Activated naive CD4-positive, alpha-beta T cell treated with anti-CD3 and anti-CD28 coated beads for 36 hours (primary cell): ENCODE measurements at regions of chr1 and their contacts with region 1.

Region 1: DNA sequence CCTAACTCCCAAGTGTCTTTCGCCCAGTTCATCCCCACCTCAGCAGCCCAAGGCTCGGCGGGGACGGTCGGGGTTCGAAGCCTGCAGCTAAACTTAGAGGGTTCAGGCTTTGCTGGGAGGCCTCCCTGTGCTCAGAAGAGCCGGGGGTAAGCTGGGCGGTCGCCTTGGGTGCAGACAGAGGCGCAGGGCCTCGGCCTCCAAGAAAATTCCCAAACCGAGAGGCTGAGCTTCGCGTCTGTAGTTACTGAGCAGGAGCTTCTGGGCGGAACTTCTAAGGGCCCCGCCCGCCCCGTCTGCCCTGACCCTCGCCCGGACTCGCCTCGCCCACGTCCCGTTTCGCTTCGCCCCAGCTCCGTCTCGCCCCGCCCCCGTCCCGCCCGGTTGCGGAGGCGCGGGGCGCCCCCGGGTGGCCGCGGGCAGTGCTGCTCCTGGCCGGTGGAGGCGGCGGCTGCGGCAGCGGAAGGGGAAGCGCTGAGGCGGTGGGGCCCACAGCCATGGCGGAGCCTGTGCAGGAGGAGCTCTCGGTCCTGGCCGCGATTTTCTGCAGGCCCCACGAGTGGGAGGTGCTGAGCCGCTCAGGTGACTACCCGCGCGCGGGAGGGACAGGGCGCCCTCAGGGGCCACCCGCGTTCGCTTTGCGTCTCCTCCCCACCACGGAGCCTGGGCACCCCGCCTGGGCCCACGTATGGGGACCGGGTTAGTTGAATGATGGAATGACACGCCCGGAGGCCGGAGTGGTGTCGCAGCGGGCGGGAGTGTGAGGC is at the start of gene RWDD3:
- DNase-seq: peak; percentile 92
- H3K4me3 Mint-ChIP-seq: peak within 1 kb of the TSS; percentile 90
- H3K27ac Mint-ChIP-seq: peak within 1 kb of the TSS; percentile 84
- H3K4me1 Mint-ChIP-seq: peaks cover 40% of the 10 kb centered on the region
- H3K27me3 Mint-ChIP-seq: peaks cover 5% of the 10 kb centered on the region
- total RNA-seq, gene RWDD3: 11.4 to 12.4 TPM

Region 2: GRCh38 chr1:94417978-94418663 is 815.8 kb before region 1 on chr1 and contains the start of gene ABCD3:
- CTCF ChIA-PET with region 1: no interaction called
- intact Hi-C with region 1: loop called (anchors 1 kb)
- DNase-seq: peak; percentile 94
- H3K4me3 Mint-ChIP-seq: no peak within 1 kb of the TSS
- H3K27ac Mint-ChIP-seq: peak within 1 kb of the TSS; percentile 43
- H3K4me1 Mint-ChIP-seq: peaks cover 35% of the 10 kb centered on the region
- H3K27me3 Mint-ChIP-seq: no peaks in the 10 kb centered on the region
- total RNA-seq, gene ABCD3: 29.2 to 30.8 TPM

Region 3: DNA sequence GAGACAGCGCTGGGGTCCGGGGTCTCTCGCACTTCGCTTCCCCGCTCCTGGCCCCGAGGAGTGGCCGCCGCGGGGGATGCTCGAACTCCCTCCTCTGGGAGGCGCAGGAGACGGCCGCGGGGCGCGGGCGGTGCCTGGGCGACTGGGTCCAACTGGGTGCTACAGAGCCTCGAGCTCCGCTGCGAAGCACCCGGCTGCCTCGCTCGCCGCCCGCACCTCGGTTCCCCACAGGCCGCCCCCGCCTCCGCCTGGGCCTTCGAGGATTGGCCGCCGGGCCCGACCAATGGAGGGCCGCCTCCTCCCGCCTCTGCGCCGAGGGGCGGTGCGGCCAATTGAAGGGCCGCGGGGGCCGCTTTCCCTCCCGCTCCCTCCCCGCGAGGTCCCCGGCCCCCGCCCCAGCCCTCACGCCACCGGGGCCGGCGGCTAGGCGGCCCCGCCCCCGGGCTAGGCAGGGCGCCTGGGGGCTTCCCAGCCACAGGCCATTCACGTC is 307.0 kb before region 1 on chr1 and contains the start of gene CNN3:
- CTCF ChIA-PET with region 1: no interaction called
- intact Hi-C with region 1: loop called (anchors 2 kb)
- DNase-seq: peak; percentile 77
- H3K4me3 Mint-ChIP-seq: peak within 1 kb of the TSS; percentile 85
- H3K27ac Mint-ChIP-seq: no peak within 1 kb of the TSS
- H3K4me1 Mint-ChIP-seq: peaks cover 21% of the 10 kb centered on the region
- H3K27me3 Mint-ChIP-seq: peaks cover 15% of the 10 kb centered on the region
- total RNA-seq, gene CNN3: 10.0 to 10.6 TPM

Region 4: DNA sequence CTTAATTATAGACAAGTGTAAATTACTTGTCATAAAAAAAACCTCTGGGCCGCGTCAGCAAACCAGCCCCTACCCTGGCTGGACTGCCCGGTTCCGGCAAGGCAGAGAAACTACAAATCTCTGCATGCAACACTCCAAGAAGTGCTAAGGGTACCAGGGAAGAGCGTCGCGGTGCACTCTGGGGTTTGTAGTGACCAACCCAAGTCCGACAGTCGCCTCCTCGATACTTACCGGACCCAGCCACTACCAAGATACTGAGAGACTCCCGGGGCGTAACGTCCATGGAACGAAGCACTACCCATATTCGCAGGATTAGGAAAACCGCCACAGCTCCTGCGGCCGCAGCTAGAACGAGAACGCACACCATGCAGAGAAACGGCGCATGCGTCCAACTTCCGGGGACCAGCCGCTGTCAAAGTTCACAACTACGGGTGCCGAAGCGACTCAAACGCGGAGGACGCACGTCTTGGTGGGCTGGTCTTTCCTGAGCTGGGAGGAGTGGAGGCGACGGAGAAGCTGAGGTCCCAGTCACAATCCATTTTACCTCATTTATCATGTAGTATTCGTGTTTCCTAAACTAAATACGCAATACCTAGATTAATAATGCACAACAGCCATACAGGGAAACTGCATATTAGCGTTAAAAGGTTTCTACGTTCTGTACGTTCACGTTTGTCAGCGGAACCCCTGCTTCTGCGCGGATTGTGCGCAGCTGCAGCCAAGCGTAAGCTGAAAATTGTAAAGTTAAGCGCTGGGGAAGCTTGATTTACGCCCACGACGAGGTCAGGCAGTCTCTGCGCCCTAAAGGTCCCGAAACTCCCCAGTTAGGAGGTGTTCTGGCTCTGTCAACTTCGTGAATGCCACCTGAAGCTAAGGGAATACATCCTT is 161.1 kb before region 1 on chr1 and contains the start of gene ALG14:
- CTCF ChIA-PET with region 1: interaction called, 7 read pairs
- intact Hi-C with region 1: loop called (anchors 1 kb)
- DNase-seq: peak; percentile 96
- H3K4me3 Mint-ChIP-seq: peak within 1 kb of the TSS; percentile 91
- H3K27ac Mint-ChIP-seq: peak within 1 kb of the TSS; percentile 95
- H3K4me1 Mint-ChIP-seq: peaks cover 12% of the 10 kb centered on the region
- H3K27me3 Mint-ChIP-seq: peaks cover 2% of the 10 kb centered on the region
- total RNA-seq, gene ALG14: 4.1 to 6.2 TPM

Region 5: DNA sequence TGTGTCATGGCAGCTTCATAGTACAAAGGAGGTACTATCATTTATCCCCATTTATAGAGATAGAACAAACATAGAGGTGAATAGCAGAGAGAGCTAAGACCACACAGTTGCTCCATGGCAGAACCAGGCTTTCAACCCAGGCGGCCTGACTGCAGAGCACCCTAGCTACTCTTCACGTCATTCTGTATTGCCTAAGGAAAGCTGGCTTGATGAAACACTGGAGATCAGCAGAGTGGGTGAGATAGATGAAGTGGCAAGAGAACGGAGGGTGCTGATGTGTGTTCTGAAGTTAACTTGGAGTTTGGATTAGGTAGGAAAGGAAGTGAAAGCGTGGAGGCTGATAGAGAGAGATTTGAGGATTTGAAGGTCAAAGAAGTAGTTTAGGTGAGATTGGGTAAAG is 47.8 kb before region 1 on chr1:
- CTCF ChIA-PET with region 1: no interaction called
- intact Hi-C with region 1: no loop called
- DNase-seq: no peak
- H3K4me3 Mint-ChIP-seq: no peak overlapping the region
- H3K27ac Mint-ChIP-seq: no peak overlapping the region
- H3K4me1 Mint-ChIP-seq: no peaks in the 10 kb centered on the region
- H3K27me3 Mint-ChIP-seq: peaks cover 19% of the 10 kb centered on the region

Region 6: DNA sequence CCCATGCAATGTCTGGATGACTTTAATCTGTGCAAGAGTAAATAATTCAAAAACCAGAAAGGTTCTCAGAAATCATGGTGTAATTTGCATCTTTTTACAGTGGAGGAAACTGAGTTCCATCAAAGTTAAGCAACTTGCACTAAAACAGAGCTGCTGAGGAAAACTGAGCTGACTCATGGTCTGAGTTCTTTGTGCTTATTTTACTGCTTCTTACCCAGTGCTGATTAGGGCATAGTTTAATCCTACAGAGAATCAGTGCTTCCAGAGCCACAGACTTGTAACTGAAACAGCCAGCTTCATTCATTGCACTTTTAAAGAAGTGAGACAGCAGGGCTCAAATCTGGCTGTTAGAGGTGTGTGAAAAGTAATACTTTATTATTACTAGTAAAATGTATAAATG is 10.8 kb before region 1 on chr1:
- CTCF ChIA-PET with region 1: interaction called, 12 read pairs
- intact Hi-C with region 1: no loop called
- DNase-seq: no peak
- H3K4me3 Mint-ChIP-seq: no peak overlapping the region
- H3K27ac Mint-ChIP-seq: no peak overlapping the region
- H3K4me1 Mint-ChIP-seq: no peaks in the 10 kb centered on the region
- H3K27me3 Mint-ChIP-seq: peaks cover 8% of the 10 kb centered on the region

Region 7: DNA sequence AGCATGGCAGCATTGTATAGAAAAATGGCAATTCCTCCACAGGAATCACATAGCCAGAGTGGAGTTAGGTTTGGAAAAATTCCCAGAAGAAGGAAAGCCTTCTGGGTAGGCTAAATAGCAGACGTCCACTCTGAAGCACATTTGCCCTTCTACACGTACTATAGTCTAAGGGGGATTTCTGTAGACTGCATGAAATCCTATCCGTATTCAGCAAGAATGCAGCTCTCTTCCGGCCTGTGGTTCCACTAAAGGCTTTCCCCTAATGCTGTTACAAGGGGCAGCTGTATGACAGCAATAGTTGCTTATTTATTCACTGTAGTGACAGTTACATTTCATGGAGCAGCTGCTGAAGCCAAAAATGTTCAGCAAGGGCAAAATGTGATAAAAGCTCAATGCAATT is 263.6 kb after region 1 on chr1:
- CTCF ChIA-PET with region 1: no interaction called
- intact Hi-C with region 1: no loop called
- DNase-seq: no peak
- H3K4me3 Mint-ChIP-seq: no peak overlapping the region
- H3K27ac Mint-ChIP-seq: no peak overlapping the region
- H3K4me1 Mint-ChIP-seq: no peaks in the 10 kb centered on the region
- H3K27me3 Mint-ChIP-seq: no peaks in the 10 kb centered on the region